ENCODE measurements at regions of chr15 and their contacts with region 1.

Region 1: GRCh38 chr15:75201609-75202250 is at the start of gene C15orf39:
- DNase-seq: peak; percentile 64 to 79
- H3K4me3 ChIP-seq: peak within 1 kb of the TSS; percentile 63 to 79
- H3K27ac ChIP-seq: peak within 1 kb of the TSS; percentile 86 to 93
- H3K4me1 ChIP-seq: peaks cover 9 to 12% of the 10 kb centered on the region in 2 donors
- H3K27me3 ChIP-seq: no peaks in the 10 kb centered on the region
- CTCF ChIP-seq: peak; percentile 69 to 97 (median 95)
- POLR2A ChIP-seq: peak; percentile 97 to 99
- total RNA-seq, gene C15orf39: 4.6 to 43.9 (median 14.1) TPM

Region 2: DNA sequence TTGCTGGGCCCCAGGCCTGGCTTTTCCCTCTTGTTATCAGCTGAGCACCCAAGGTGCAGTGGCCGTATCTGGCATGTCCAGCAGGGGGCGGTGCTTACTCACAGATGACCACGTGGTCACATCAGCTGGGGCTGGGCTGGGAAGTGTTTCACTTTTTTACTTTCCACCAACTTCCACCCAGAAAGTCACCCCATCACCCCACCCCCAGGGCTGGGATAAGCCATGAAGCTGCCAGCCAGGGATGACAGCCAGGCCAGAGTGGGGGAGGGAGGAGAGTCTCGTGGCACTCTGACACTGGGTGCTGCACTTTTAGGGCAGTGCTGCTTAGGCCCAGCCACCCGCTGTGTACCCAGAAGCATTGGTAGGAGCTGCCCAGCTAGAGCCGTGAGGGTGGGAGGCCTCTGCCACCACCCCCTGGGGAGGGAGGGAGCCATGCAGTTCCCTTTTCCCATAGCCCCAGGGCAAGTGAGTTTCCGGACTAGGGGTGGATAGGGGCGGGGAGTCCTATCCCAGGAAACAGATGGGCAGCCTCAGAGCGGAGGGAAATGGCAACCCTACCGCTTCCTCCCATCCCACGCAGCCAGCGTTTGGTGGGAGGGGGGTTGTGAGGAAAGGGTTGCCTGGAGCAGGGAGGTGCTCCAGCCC is 172.2 kb before region 1 on chr15:
- intact Hi-C with region 1: loop called (anchors 2 kb)
- DNase-seq: peak; percentile 93 to 94
- H3K4me3 ChIP-seq: no peak overlapping the region
- H3K27ac ChIP-seq: peak overlapping the region; percentile 63 to 81
- H3K4me1 ChIP-seq: peaks cover 0 to 5% of the 10 kb centered on the region in 2 donors
- H3K27me3 ChIP-seq: no peaks in the 10 kb centered on the region
- CTCF ChIP-seq: peak; percentile 89 to 99 (median 98)
- POLR2A ChIP-seq: no peak